ENCODE measurements at regions of chr17 and their contacts with region 1.

Region 1: GRCh38 chr17:5695480-5695879 is 111.2 kb upstream of the NLRP1 start:
- DNase-seq: no peak
- H3K4me3 Mint-ChIP-seq: no peak overlapping the region
- H3K27ac Mint-ChIP-seq: no peak overlapping the region
- H3K4me1 Mint-ChIP-seq: no peaks in the 10 kb centered on the region
- H3K27me3 Mint-ChIP-seq: peaks cover 17% of the 10 kb centered on the region

Region 2: DNA sequence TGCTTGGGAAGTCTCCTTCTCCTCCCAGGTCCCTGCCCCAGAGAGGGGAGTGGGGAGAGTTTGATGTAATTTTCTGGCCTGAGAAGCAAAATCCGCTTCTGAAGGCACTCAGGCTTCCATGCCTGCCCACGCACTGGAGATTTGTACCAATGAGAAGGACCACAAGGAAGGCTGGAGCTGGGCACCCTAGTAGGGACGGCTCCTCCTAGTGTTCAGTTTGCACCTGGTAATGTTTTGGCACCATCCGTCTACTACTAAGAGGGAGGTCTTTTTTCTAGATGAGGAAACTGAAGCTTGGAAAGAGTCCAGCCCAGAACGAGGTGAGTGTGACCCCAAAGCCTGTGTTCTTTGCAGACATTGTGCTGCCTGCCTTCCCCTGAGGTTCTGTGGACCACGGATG is 27.6 kb before region 1 on chr17:
- CTCF ChIA-PET with region 1: no interaction called
- POLR2A ChIA-PET with region 1: no interaction called
- intact Hi-C with region 1: no loop called
- DNase-seq: no peak
- H3K4me3 Mint-ChIP-seq: no peak overlapping the region
- H3K27ac Mint-ChIP-seq: no peak overlapping the region
- H3K4me1 Mint-ChIP-seq: no peaks in the 10 kb centered on the region
- H3K27me3 Mint-ChIP-seq: peaks cover 11% of the 10 kb centered on the region

Region 3: GRCh38 chr17:5706577-5707216 is 11.2 kb after region 1 on chr17:
- CTCF ChIA-PET with region 1: interaction called, 10 read pairs
- POLR2A ChIA-PET with region 1: no interaction called
- intact Hi-C with region 1: no loop called
- DNase-seq: peak; percentile 72
- H3K4me3 Mint-ChIP-seq: no peak overlapping the region
- H3K27ac Mint-ChIP-seq: no peak overlapping the region
- H3K4me1 Mint-ChIP-seq: no peaks in the 10 kb centered on the region
- H3K27me3 Mint-ChIP-seq: peaks cover 15% of the 10 kb centered on the region